ENCODE measurements at regions of chr7 and their contacts with region 1.

Region 1: GRCh38 chr7:28052933-28053332 is 127.7 kb downstream of the JAZF1 start:
- DNase-seq: no peak
- ATAC-seq: no peak
- H3K4me3 Mint-ChIP-seq: no peak overlapping the region
- H3K27ac Mint-ChIP-seq: no peak overlapping the region
- H3K4me1 Mint-ChIP-seq: peaks cover 10% of the 10 kb centered on the region
- H3K27me3 Mint-ChIP-seq: peaks cover 3% of the 10 kb centered on the region

Region 2: DNA sequence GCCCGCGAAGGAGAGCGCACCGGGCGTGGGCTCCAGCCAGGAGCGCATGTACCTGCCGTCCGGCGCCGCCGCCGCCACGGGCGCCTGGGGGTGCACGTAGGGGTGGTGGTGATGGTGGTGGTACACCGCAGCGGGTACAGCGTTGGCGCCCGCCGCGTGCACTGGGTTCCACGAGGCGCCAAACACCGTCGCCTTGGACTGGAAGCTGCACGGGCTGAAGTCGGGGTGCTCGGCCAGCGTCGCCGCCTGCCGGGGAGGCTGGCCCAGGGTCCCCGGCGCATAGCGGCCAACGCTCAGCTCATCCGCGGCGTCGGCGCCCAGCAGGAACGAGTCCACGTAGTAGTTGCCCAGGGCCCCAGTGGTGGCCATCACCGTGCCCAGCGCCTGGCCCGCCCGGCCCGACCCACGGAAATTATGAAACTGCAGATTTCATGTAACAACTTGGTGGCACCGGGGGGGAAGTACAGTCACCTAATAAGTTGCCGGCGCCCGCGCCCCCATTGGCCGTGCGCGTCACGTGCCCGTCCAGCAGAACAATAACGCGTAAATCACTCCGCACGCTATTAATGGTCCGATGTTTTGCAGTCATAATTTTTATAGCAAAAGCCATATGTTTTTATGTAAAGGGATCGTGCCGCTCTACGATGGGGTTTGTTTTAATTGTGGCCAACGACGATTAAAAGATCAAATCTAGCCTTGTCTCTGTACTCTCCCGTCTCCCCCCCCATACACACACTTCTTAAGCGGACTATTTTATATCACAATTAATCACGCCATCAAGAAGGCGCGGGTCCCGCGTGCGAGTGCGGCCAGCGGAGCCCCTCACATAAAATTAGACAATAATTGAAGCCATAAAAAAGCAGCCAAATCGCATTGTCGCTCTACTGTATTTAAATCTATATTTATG is 887.6 kb before region 1 on chr7 and contains the start of gene HOXA9:
- CTCF ChIA-PET with region 1: no interaction called
- POLR2A ChIA-PET with region 1: no interaction called
- intact Hi-C with region 1: no loop called
- DNase-seq: peak; percentile 38
- ATAC-seq: no peak
- H3K4me3 Mint-ChIP-seq: peak within 1 kb of the TSS; percentile 52
- H3K27ac Mint-ChIP-seq: no peak within 1 kb of the TSS
- H3K4me1 Mint-ChIP-seq: peaks cover 26% of the 10 kb centered on the region
- H3K27me3 Mint-ChIP-seq: peaks cover 70% of the 10 kb centered on the region
- total RNA-seq, gene HOXA9: not detected

Region 3: DNA sequence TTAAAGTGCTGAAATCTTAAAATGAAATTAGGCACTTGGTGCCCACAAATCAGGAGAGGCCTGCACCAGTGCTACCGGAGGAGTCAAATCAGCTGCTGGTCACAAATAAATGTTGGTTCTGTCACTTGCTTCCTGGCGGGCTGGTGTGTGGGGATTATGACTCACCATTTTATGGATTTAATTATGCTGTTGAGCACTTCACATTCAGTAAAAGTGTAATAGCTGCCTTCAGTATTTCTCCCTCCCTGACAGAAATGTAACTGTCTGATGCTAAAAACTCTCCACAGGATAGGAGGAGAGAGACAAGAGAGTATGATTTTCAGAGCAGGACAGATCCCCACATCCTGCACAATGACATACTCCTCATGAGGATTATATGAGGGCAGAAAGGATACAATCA is 58.3 kb before region 1 on chr7:
- CTCF ChIA-PET with region 1: no interaction called
- POLR2A ChIA-PET with region 1: no interaction called
- intact Hi-C with region 1: loop called in 1 of 2 experiments (anchors 10 kb)
- DNase-seq: no peak
- ATAC-seq: no peak
- H3K4me3 Mint-ChIP-seq: no peak overlapping the region
- H3K27ac Mint-ChIP-seq: no peak overlapping the region
- H3K4me1 Mint-ChIP-seq: peaks cover 10% of the 10 kb centered on the region
- H3K27me3 Mint-ChIP-seq: no peaks in the 10 kb centered on the region

Measured in activated CD4-positive, alpha-beta T cell treated with anti-CD3 and anti-CD28 coated beads for 36 hours (primary cell).